ENCODE measurements at regions of chr17 and their contacts with region 1.

Region 1: DNA sequence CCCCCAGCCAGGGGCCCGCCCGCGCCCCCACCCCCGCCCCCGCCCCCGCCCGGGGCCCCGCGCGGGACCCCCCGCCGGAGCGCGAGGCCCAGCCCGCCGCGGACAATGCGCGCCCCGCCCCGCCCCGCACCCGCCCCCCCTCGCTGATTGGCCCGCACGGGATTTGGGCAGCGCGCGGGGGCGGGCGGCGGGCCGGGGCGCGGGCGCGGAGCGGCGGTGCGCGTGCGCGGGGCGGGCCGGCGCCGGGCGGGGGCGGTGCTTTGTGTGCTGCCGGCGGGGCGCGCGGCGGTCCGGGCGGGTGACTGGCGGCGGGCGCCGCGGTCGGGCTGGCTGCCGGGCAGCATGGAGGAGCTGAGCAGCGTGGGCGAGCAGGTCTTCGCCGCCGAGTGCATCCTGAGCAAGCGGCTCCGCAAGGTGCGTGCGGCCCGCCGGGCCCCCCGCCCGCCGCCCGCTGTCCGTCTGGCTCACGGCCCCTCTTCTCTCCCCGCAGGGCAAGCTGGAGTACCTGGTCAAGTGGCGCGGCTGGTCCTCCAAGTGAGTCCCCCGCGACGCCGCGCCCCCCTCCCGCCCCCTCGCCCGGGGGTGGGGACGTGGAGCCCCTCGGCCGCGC is at the start of gene CBX2:
- DNase-seq: no peak
- H3K4me3 ChIP-seq: peak within 1 kb of the TSS; percentile 64
- CTCF ChIP-seq: no peak

Region 2: DNA sequence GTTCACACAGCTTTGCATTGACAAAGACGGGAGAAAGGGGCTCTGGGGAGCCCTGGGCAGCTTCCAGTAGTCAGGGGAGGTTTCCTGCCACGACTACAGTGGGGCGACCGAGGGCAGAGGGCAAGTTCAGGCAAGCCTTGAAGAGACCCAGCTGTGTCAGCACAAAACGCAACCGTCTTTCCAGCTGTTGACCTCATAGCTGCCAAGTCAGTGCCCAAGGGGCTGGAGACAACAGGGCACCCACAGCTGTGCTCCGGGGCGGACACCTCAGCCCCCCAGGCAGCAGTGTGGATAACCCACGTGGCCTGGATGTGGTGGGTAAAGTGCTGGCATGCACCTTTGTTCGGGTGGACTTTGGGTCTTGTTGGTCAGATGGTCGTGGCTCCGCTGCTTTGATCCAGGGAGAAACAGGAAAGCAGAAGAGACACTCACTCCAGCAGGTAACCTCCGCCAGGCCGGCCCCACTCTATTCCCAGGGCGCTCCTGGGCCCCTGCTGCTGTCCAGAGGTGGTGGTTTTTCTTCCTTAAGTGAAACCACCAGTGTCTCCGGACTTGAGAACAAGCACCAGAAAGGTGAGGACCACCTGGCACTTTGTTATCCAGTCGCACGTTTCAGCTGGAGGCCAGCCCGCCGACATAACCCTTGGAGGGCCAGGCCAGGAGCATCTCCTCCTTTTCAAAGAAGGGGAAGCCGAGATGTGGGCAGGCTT is 17.6 kb before region 1 on chr17:
- CTCF ChIA-PET with region 1: no interaction called
- POLR2A ChIA-PET with region 1: no interaction called
- DNase-seq: no peak
- H3K4me3 ChIP-seq: no peak overlapping the region
- CTCF ChIP-seq: no peak

Region 3: GRCh38 chr17:79789534-79790353 is 11.7 kb after region 1 on chr17:
- CTCF ChIA-PET with region 1: interaction called, 12 read pairs
- POLR2A ChIA-PET with region 1: no interaction called
- DNase-seq: no peak
- H3K4me3 ChIP-seq: no peak overlapping the region
- CTCF ChIP-seq: peak; percentile 64

Region 4: GRCh38 chr17:79933863-79934652 is 156.1 kb after region 1 on chr17:
- CTCF ChIA-PET with region 1: no interaction called
- POLR2A ChIA-PET with region 1: no interaction called
- DNase-seq: no peak
- H3K4me3 ChIP-seq: no peak overlapping the region
- CTCF ChIP-seq: no peak